Activated CD4-positive, alpha-beta memory T cell treated with anti-CD3 and anti-CD28 coated beads, Interleukin-2, amount 10 ng/mL, durations not matched to agents 7 days and 5 days (primary cell): ENCODE measurements at regions of chr9 and their contacts with region 1.

Region 1: DNA sequence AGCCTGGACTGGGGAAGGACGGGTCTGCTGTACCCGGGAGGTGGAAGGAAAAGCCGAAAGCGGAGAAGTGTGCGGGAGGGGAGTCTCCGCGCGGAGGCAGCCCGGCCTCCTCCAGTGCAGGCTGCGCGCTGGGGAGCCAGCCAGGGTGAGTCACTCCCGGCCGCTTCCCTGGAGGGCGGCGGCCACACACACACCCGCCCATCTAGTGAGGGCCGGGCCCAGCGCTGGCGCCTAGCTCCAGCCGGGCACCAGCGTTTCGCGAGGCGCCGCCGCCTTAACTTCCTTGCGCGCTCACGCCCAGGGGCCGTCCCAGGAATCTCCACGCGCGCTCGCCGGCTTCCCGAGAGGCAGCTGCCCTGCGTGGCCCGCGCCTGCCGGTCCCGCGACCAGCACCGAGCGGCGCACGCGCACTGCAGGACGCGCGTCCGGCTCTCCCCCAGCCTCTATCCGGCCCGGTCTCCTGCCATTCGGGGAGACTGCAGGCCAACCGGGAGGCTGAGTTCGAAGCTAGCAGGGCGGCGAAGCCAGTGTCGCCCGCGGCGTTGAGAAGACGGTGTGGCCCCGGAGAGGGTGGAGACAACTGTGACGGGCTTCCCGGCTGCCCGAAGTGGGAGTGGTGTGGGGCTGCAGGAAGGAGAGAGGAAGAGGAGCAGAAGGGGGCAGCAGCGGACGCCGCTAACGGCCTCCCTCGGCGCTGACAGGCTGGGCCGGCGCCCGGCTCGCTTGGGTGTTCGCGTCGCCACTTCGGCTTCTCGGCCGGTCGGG is at the start of gene JAK2:
- DNase-seq: peak; percentile 88
- H3K4me3 Mint-ChIP-seq: peak within 1 kb of the TSS; percentile 87
- H3K27ac Mint-ChIP-seq: peak within 1 kb of the TSS; percentile 98
- H3K4me1 Mint-ChIP-seq: peaks cover 49% of the 10 kb centered on the region
- H3K27me3 Mint-ChIP-seq: no peaks in the 10 kb centered on the region
- total RNA-seq, gene JAK2: 27.2 to 30.0 TPM

Region 2: DNA sequence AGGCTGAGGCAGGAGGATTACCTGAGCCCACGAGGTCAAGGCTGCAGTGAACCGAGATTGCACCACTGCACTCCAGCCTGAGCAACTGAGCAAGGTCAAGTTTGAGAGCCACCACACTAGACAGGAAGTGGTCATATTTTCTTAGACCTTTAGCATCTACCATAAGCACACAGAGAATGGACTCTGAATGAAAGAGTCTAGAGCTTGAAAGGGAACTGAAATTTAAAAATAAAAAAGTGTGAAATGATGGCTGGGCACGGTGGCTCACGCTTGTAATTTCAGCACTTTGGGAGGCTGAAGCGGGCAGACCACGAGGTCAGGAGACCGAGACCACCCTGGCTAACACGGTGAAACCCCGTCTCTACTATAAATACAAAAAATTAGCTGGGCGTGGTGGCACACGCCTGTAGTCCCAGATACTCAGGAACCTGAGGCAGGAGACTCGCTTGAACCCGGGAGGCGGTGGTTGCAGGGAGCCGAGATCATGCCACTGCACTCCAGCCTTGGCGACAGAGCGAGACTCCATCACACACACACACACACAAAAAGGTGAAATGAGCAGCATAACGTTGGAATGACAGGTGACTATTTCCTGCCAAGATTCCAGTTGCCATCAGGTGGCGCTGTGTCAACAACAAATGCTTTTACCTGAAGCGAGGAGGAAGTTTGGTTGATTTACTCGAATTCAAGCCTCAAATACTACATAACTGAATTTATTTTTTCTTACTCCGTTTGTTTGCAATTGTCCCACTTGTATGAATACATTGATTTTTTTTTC is 222.5 kb before region 1 on chr9:
- CTCF ChIA-PET with region 1: interaction called, 41 read pairs
- POLR2A ChIA-PET with region 1: interaction called, 10 read pairs
- DNase-seq: peak; percentile 87
- H3K4me3 Mint-ChIP-seq: peak overlapping the region; percentile 18
- H3K27ac Mint-ChIP-seq: peak overlapping the region; percentile 10
- H3K4me1 Mint-ChIP-seq: peaks cover 16% of the 10 kb centered on the region
- H3K27me3 Mint-ChIP-seq: peaks cover 8% of the 10 kb centered on the region

Region 3: DNA sequence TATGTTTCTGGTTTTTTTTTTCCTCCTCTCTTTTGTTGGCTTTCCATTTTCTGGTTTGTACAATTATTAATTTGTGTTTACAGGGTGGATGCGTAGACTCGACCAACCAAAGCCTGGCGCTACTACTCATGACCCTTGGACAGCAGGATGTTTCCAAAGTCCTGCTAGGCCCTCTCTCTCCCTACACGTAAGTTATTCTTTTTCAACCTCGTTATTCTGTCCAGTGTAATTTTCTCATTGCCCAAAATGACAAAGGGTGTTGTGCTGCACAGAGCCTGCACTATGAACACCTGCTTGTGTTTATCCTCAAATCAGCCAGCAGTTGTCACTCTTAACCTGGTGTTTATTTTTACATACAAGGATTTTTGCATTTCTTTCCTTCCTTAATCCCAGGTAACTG is 135.4 kb before region 1 on chr9:
- CTCF ChIA-PET with region 1: interaction called, 26 read pairs
- POLR2A ChIA-PET with region 1: interaction called, 8 read pairs
- DNase-seq: no peak
- H3K4me3 Mint-ChIP-seq: no peak overlapping the region
- H3K27ac Mint-ChIP-seq: no peak overlapping the region
- H3K4me1 Mint-ChIP-seq: peaks cover 18% of the 10 kb centered on the region
- H3K27me3 Mint-ChIP-seq: no peaks in the 10 kb centered on the region

Region 4: GRCh38 chr9:4923580-4924544 is 60.9 kb before region 1 on chr9:
- CTCF ChIA-PET with region 1: interaction called, 7 read pairs
- POLR2A ChIA-PET with region 1: interaction called, 18 read pairs
- DNase-seq: no peak
- H3K4me3 Mint-ChIP-seq: no peak overlapping the region
- H3K27ac Mint-ChIP-seq: peak overlapping the region; percentile 11
- H3K4me1 Mint-ChIP-seq: peaks cover 26% of the 10 kb centered on the region
- H3K27me3 Mint-ChIP-seq: no peaks in the 10 kb centered on the region

Region 5: DNA sequence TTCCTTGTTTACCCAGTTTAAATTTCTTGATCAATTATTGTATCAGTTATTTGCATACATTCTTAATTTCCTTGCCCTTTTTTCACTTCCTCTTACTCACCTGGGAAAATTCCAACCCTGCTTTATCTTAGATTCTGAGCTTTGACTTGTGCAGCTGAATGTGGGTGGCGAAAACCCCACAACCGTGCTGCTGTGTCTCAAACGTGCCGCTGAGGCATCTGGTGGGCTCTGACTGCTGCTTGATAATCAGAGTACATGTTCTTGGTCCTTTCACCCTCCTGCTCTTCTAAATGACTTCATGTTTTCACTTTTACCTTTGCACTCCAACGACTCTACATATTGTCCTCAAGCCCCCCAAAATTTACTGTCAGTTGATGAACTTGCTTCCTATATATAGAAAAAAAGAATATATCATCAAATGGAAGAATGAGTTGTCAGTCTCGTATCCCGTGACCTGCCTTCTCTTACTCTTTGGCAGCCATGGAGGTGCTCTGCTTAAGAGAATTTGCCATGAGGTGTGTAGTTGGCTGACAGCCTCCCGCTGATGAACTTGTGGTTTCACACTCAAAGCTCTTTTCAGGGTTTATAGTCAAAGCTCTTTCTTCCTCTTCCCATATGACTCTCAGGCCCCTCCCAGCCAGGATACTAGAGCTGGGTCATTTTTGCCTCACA is 13.7 kb before region 1 on chr9:
- CTCF ChIA-PET with region 1: interaction called, 22 read pairs
- POLR2A ChIA-PET with region 1: interaction called, 41 read pairs
- DNase-seq: peak; percentile 74
- H3K4me3 Mint-ChIP-seq: no peak overlapping the region
- H3K27ac Mint-ChIP-seq: no peak overlapping the region
- H3K4me1 Mint-ChIP-seq: peaks cover 32% of the 10 kb centered on the region
- H3K27me3 Mint-ChIP-seq: no peaks in the 10 kb centered on the region

Region 6: DNA sequence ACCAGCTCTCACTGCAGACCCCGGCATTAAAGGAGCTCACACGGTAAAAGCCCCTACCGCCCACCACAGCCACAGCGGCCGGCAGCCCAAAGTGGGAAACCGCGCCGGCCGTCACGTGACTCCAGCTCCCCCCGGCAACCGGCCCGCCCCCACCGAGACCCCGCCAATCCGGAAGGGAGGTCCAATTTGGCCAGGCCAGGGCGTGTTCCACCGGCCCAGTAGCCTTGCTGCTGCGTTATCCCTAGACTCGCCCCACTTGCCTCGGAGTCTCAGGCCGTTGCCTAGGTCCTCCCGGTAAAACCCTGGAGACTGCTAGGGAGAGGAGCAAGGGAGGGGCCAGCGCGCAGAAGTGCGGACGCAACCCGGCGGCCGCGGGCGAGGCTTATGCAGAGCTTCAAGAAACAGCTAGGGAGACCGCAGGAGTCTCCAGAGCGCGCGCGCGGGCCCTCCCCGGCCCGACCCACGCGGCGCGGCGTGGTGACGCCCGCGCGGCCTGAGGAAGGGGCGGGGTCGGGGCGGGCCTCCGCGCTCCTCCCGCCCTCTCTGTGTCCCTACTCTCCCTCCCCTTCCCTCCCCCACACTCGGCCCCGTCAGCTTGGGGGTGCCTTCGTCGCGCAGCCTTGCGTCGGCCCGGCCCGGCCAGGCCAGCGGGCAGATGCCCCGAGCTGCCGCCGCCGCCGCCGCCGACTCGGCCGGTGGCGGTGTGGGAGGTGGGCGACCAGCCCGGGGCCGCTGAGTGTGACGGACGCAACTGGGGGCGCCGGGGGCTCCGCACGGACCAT is 643.9 kb after region 1 on chr9 and contains the start of gene RIC1:
- CTCF ChIA-PET with region 1: no interaction called
- POLR2A ChIA-PET with region 1: interaction called, 12 read pairs
- DNase-seq: peak; percentile 93
- H3K4me3 Mint-ChIP-seq: peak within 1 kb of the TSS; percentile 99
- H3K27ac Mint-ChIP-seq: peak within 1 kb of the TSS; percentile 100
- H3K4me1 Mint-ChIP-seq: peaks cover 57% of the 10 kb centered on the region
- H3K27me3 Mint-ChIP-seq: no peaks in the 10 kb centered on the region
- total RNA-seq, gene RIC1: 20.7 to 21.5 TPM